Natural killer cell (primary cell): ENCODE measurements at regions of chr18 and their contacts with region 1.

Region 1: DNA sequence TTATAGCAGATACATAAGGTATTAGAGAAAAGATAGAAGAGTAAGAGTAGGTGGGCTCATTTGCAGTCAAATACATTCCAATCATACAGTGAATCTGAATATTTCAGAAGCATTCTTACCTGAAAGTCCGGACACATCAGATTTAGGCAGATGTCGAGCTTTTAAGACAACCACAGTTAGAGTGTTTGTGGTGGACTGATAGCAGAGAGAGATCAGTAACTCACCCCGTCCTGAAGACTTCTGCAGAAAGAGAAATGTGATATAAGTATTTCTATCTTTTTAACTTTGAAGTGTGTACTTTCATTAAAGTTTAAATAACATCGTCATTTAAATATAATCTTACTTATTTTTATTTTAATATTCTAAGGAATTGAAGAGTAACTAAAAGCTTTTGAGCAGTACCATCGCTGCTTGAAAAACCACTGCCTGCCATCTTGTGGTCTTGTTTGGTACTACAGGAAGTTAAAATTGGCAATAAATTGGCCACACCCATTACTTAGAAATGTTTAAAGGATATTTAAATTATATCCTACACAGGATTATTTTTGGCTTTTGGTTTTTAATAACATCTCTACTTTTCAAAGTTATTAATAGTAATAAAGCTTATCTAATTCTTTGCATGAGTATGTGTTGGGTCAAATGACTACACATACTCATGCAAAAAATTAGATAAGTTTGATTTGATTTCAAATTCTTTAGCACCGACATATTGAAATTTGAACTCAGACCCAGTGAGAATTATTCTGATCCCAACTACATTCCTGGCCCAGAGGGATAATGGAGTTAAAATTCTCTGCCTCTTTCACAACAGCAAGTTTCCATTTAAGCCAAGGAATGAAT is 5.5 kb downstream of the SYT4 start:
- DNase-seq: peak in 1 of 2 donors; percentile 39
- ATAC-seq: no peak
- H3K4me3 ChIP-seq: no peak overlapping the region
- H3K4me3 Mint-ChIP-seq: no peak overlapping the region
- H3K27ac ChIP-seq: no peak overlapping the region
- H3K27ac Mint-ChIP-seq: no peak overlapping the region
- H3K4me1 ChIP-seq: no peaks in the 10 kb centered on the region
- H3K4me1 Mint-ChIP-seq: no peaks in the 10 kb centered on the region
- H3K27me3 ChIP-seq: no peaks in the 10 kb centered on the region
- H3K27me3 Mint-ChIP-seq: no peaks in the 10 kb centered on the region
- CTCF ChIP-seq: peak; percentile 67

Region 2: GRCh38 chr18:42053188-42053781 is 1218.5 kb before region 1 on chr18:
- intact Hi-C with region 1: loop called (anchors 5 kb)
- DNase-seq: peak; percentile 28 to 78
- ATAC-seq: peak; percentile 82 to 87 (median 85)
- H3K4me3 ChIP-seq: no peak overlapping the region
- H3K4me3 Mint-ChIP-seq: no peak overlapping the region
- H3K27ac ChIP-seq: no peak overlapping the region
- H3K27ac Mint-ChIP-seq: no peak overlapping the region
- H3K4me1 ChIP-seq: no peaks in the 10 kb centered on the region
- H3K4me1 Mint-ChIP-seq: peaks cover 6 to 14% of the 10 kb centered on the region in 2 donors
- H3K27me3 ChIP-seq: no peaks in the 10 kb centered on the region
- H3K27me3 Mint-ChIP-seq: no peaks in the 10 kb centered on the region
- CTCF ChIP-seq: peak; percentile 93

Region 3: DNA sequence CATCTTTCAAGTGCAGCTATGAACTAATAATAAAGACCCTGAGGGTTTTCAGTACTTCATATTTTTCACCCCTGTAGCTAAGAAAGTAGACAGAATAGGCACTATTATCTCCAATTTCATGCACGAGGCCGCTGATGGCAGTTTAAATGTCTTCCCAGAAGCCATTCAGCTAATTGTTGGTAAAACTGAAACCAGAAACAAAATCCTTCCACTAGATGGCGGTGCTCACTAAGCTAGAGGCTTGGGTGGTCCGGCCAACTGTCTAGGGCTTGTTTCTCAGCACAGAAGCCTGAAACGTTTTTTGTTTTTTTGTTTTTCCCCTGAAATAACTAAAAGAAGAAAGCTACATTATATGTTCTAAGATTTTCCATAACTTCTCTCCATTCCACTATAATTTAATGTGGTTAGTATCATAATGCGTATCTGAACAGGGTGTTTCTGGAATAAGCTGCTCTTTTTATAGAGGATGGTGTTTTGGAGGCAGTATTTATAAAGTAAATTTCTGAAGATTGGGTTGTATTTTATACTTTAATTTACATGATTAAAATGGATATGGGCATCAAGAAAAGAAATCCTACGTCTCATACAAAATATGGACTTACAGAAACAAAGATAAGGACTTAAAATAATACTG is 1157.4 kb before region 1 on chr18:
- intact Hi-C with region 1: loop called (anchors 2 kb)
- DNase-seq: peak; percentile 21 to 72
- ATAC-seq: peak; percentile 75 to 90 (median 85)
- H3K4me3 ChIP-seq: no peak overlapping the region
- H3K4me3 Mint-ChIP-seq: no peak overlapping the region
- H3K27ac ChIP-seq: no peak overlapping the region
- H3K27ac Mint-ChIP-seq: peak overlapping the region; percentile 50 to 67
- H3K4me1 ChIP-seq: peaks cover 3% of the 10 kb centered on the region
- H3K4me1 Mint-ChIP-seq: peaks cover 15 to 25% of the 10 kb centered on the region in 2 donors
- H3K27me3 ChIP-seq: no peaks in the 10 kb centered on the region
- H3K27me3 Mint-ChIP-seq: peaks cover 7 to 13% of the 10 kb centered on the region in 2 donors
- CTCF ChIP-seq: peak; percentile 90